ENCODE measurements at regions of chr17 and their contacts with region 1.

Region 1: GRCh38 chr17:58417300-58418092 is at the start of gene RNF43:
- DNase-seq: peak; percentile 94
- ATAC-seq: peak; percentile 99
- H3K4me3 Mint-ChIP-seq: peak within 1 kb of the TSS; percentile 9
- H3K27ac Mint-ChIP-seq: peak within 1 kb of the TSS; percentile 38
- H3K4me1 Mint-ChIP-seq: peaks cover 32% of the 10 kb centered on the region
- H3K27me3 Mint-ChIP-seq: no peaks in the 10 kb centered on the region
- total RNA-seq, gene RNF43: 0.71 to 1.0 TPM

Region 2: DNA sequence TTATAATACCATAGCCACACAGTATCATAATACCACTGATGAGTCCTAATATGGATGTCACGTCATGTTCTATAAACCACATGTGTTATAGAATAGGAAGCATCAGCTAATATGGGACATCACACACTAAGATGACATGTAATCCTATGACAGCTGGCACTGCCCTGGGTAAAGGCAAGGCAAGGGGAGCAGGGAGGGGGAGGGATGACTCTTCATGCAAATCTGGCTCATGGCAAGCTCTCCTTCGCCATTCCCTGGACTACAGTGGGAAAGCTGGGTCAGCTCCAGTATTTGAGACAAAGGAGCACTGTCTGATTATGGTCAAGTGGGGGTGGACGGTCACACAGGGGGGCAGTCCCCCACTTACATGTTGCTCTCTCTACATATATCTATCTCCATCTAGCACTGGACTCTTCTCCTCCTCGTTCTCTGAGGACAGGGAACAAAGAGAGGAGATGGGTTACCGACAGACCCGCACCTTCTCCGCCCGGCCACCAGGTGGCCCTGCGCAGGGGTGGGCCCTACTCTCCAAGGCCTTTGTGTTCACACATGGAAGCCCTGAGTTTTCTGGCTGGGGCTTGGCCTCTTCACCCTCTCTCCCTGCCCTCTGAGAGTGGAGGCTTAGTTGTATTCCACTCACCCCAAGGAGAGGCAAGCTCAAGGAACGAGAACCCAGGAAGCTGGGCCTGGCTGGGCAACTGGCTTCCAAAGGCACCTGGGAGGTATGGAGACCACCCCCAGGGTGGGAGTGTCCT is 113.3 kb before region 1 on chr17:
- CTCF ChIA-PET with region 1: interaction called, 10 read pairs
- POLR2A ChIA-PET with region 1: no interaction called
- intact Hi-C with region 1: loop called in 1 of 2 experiments (anchors 1 kb)
- DNase-seq: peak; percentile 80
- ATAC-seq: peak; percentile 97
- H3K4me3 Mint-ChIP-seq: no peak overlapping the region
- H3K27ac Mint-ChIP-seq: no peak overlapping the region
- H3K4me1 Mint-ChIP-seq: peaks cover 3% of the 10 kb centered on the region
- H3K27me3 Mint-ChIP-seq: no peaks in the 10 kb centered on the region

Region 3: GRCh38 chr17:58337600-58338453 is 79.7 kb before region 1 on chr17:
- CTCF ChIA-PET with region 1: interaction called, 18 read pairs
- POLR2A ChIA-PET with region 1: interaction called, 15 read pairs
- intact Hi-C with region 1: no loop called
- DNase-seq: peak; percentile 97
- ATAC-seq: peak; percentile 57
- H3K4me3 Mint-ChIP-seq: peak overlapping the region; percentile 100
- H3K27ac Mint-ChIP-seq: peak overlapping the region; percentile 99
- H3K4me1 Mint-ChIP-seq: peaks cover 26% of the 10 kb centered on the region
- H3K27me3 Mint-ChIP-seq: no peaks in the 10 kb centered on the region

Region 4: DNA sequence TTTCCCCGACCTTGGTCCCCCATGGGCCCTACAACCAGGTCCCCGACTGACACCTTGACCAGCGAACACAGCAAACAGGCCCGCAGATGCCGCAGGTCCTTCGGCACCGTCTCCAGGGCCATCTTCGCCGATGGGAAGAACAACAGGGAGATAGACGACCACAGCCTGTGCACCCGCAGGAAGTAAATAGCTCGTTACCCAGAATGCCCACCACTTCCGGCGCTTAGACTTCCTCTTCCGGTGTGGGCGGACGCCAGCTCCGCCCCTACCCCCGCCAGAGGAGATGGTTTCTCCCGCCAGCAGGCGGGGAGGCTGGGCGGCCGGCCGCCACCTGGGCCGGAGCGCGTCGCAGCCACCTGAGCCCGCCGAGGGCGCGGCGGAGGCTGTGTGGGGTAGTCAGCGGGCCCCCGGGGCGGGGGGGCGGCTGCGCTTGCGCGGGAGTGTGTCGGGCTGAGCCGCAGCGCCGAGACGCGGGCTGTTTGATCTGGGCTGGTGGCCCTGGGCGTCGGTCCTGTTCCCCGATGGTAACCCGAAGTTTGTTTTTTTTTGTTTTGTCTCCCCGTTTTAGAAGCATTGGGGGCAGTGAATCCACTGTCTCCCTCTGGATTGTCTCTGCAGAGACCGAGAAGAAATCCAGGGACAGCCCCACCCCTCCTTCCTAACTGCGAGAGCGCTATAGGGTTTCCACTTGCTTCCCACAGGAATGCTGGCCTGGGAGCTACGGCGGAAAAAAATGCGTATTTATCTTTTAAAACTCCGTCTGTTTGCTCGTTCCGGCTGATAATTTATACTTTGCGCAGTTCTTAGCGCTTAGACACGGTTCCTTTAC is 65.3 kb before region 1 on chr17 and contains the start of gene SUPT4H1:
- CTCF ChIA-PET with region 1: interaction called, 25 read pairs
- POLR2A ChIA-PET with region 1: interaction called, 13 read pairs
- intact Hi-C with region 1: loop called (anchors 1 kb)
- DNase-seq: peak; percentile 96
- ATAC-seq: peak; percentile 78
- H3K4me3 Mint-ChIP-seq: peak within 1 kb of the TSS; percentile 97
- H3K27ac Mint-ChIP-seq: peak within 1 kb of the TSS; percentile 98
- H3K4me1 Mint-ChIP-seq: peaks cover 38% of the 10 kb centered on the region
- H3K27me3 Mint-ChIP-seq: no peaks in the 10 kb centered on the region
- total RNA-seq, gene SUPT4H1: 106 to 129 TPM

Region 5: GRCh38 chr17:58394534-58395223 is 22.8 kb before region 1 on chr17:
- CTCF ChIA-PET with region 1: interaction called, 11 read pairs
- POLR2A ChIA-PET with region 1: no interaction called
- intact Hi-C with region 1: no loop called
- DNase-seq: no peak
- ATAC-seq: no peak
- H3K4me3 Mint-ChIP-seq: no peak overlapping the region
- H3K27ac Mint-ChIP-seq: no peak overlapping the region
- H3K4me1 Mint-ChIP-seq: no peaks in the 10 kb centered on the region
- H3K27me3 Mint-ChIP-seq: no peaks in the 10 kb centered on the region

Measured in activated CD4-positive, alpha-beta T cell treated with anti-CD3 and anti-CD28 coated beads for 36 hours (primary cell).